ENCODE measurements at regions of chr9 and their contacts with region 1.

Region 1: DNA sequence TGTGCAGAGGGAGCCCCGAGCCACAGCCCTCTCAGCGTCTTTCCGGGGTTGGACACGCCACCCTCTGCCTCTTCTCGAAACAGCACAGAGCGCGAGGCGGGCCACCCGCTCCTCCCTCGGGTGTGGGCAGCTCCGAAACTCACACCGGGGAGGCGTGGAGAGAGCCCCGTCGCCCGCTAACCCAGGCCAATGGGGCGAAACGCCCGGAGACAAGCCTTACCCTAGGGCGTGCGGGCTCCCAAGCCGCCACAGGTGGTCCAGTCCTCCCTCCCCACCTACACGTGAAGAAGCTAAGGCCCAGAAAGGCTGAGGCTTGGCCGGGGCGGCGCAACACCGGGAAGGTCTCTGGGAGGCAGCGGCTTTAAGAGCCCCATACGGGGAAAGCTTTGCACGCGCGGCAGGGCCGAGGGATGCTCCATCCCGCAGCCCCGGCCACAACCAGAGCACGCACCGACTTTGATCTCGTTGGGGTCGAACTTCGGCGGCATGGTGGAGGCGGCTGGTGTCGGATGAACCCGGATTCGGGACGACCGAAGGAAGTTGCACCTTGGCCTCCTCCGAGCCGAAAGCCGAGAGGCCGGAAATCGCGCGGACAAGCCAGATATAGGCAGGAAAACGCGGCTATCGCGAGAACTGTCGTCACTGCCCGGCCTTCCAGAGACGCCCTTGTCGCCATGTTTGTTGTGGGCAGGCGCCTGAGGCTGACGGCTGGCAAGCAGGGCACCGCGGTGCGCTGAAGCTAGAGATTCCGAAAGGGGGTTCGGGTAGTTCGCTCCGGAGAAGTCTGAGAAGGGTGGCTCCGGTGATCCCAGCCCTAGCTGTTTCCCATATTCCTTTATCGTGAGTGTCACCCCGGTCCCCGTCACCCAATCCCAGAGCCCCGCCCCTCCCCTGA is at the starts of genes LRSAM1 and RPL12:
- DNase-seq: peak; percentile 99
- ATAC-seq: peak; percentile 65
- H3K4me3 Mint-ChIP-seq: peak within 1 kb of the TSS; percentile 98
- H3K27ac Mint-ChIP-seq: peak within 1 kb of the TSS; percentile 98
- H3K4me1 Mint-ChIP-seq: peaks cover 36% of the 10 kb centered on the region
- H3K27me3 Mint-ChIP-seq: no peaks in the 10 kb centered on the region
- total RNA-seq, gene LRSAM1: 20.0 to 20.4 TPM
- total RNA-seq, gene RPL12: 2,222 to 2,735 TPM

Region 2: GRCh38 chr9:126804696-126805545 is 646.2 kb before region 1 on chr9 and contains the start of gene ZBTB43:
- CTCF ChIA-PET with region 1: no interaction called
- POLR2A ChIA-PET with region 1: no interaction called
- intact Hi-C with region 1: no loop called
- DNase-seq: peak; percentile 99
- ATAC-seq: peak; percentile 85
- H3K4me3 Mint-ChIP-seq: peak within 1 kb of the TSS; percentile 96
- H3K27ac Mint-ChIP-seq: peak within 1 kb of the TSS; percentile 100
- H3K4me1 Mint-ChIP-seq: peaks cover 36% of the 10 kb centered on the region
- H3K27me3 Mint-ChIP-seq: no peaks in the 10 kb centered on the region
- total RNA-seq, gene ZBTB43: 19.3 to 23.0 TPM

Region 3: GRCh38 chr9:126939821-126940221 is 511.3 kb before region 1 on chr9:
- CTCF ChIA-PET with region 1: no interaction called
- POLR2A ChIA-PET with region 1: no interaction called
- intact Hi-C with region 1: loop called in 1 of 2 experiments (anchors 2 kb)
- DNase-seq: no peak
- ATAC-seq: no peak
- H3K4me3 Mint-ChIP-seq: no peak overlapping the region
- H3K27ac Mint-ChIP-seq: no peak overlapping the region
- H3K4me1 Mint-ChIP-seq: peaks cover 4% of the 10 kb centered on the region
- H3K27me3 Mint-ChIP-seq: peaks cover 16% of the 10 kb centered on the region

Region 4: DNA sequence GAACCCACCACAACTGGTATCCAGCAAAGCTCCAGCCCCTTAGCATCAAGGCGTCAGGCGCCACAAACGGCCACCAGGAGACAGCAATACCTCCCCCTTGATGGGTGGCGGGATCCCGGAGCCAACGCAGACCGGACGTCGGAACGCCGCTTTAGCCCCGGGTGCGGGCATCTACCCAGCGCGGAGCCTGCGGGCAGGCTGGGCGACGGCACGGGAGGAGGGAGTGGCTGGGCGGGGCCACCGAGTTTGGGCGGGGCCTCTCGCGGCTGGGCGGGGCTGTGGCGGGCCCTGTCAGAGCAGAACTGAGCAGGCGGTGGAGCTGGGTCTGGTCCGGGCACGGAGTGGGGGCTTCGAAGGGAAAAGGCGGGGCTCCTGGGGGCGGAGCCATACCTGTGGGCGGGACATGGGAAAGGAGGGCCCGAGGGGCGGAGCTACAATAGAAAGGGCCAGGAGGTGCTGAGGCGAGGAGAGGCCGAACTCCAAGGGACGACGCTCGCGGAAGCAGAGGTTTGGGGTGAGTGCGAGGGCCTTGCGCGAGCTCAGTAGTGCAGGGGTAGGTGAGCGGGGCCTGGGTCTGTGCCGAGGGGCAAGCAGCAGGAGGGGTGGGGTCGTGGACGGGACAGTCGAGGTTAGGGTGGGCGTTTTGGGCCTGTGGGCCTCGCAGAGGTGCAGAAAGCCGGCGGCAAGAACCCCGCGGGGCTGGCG is 226.7 kb before region 1 on chr9:
- CTCF ChIA-PET with region 1: no interaction called
- POLR2A ChIA-PET with region 1: interaction called, 4 read pairs
- intact Hi-C with region 1: loop called in 1 of 2 experiments (anchors 1 kb)
- DNase-seq: peak; percentile 93
- ATAC-seq: peak; percentile 79
- H3K4me3 Mint-ChIP-seq: peak overlapping the region; percentile 68
- H3K27ac Mint-ChIP-seq: peak overlapping the region; percentile 16
- H3K4me1 Mint-ChIP-seq: peaks cover 24% of the 10 kb centered on the region
- H3K27me3 Mint-ChIP-seq: peaks cover 15% of the 10 kb centered on the region

Region 5: GRCh38 chr9:127311239-127311741 is 139.8 kb before region 1 on chr9:
- CTCF ChIA-PET with region 1: interaction called, 4 read pairs
- POLR2A ChIA-PET with region 1: no interaction called
- intact Hi-C with region 1: loop called (anchors 1 to 10 kb)
- DNase-seq: peak; percentile 47
- ATAC-seq: peak; percentile 30
- H3K4me3 Mint-ChIP-seq: no peak overlapping the region
- H3K27ac Mint-ChIP-seq: no peak overlapping the region
- H3K4me1 Mint-ChIP-seq: peaks cover 2% of the 10 kb centered on the region
- H3K27me3 Mint-ChIP-seq: peaks cover 22% of the 10 kb centered on the region

Region 6: GRCh38 chr9:127396808-127397497 is 54.1 kb before region 1 on chr9 and contains the start of gene SLC2A8:
- CTCF ChIA-PET with region 1: no interaction called
- POLR2A ChIA-PET with region 1: no interaction called
- intact Hi-C with region 1: loop called in 1 of 2 experiments (anchors 1 kb)
- DNase-seq: peak; percentile 93
- ATAC-seq: peak; percentile 96
- H3K4me3 Mint-ChIP-seq: peak within 1 kb of the TSS; percentile 58
- H3K27ac Mint-ChIP-seq: no peak within 1 kb of the TSS
- H3K4me1 Mint-ChIP-seq: peaks cover 12% of the 10 kb centered on the region
- H3K27me3 Mint-ChIP-seq: peaks cover 62% of the 10 kb centered on the region
- total RNA-seq, gene SLC2A8: 1.3 to 1.7 TPM

Region 7: GRCh38 chr9:127611899-127612790 is 161.1 kb after region 1 on chr9 and contains the start of gene STXBP1:
- CTCF ChIA-PET with region 1: no interaction called
- POLR2A ChIA-PET with region 1: no interaction called
- intact Hi-C with region 1: loop called in 1 of 2 experiments (anchors 1 kb)
- DNase-seq: peak; percentile 92
- ATAC-seq: peak; percentile 87
- H3K4me3 Mint-ChIP-seq: peak within 1 kb of the TSS; percentile 85
- H3K27ac Mint-ChIP-seq: peak within 1 kb of the TSS; percentile 71
- H3K4me1 Mint-ChIP-seq: peaks cover 26% of the 10 kb centered on the region
- H3K27me3 Mint-ChIP-seq: peaks cover 32% of the 10 kb centered on the region
- total RNA-seq, gene STXBP1: 15.9 to 18.1 TPM

Region 8: DNA sequence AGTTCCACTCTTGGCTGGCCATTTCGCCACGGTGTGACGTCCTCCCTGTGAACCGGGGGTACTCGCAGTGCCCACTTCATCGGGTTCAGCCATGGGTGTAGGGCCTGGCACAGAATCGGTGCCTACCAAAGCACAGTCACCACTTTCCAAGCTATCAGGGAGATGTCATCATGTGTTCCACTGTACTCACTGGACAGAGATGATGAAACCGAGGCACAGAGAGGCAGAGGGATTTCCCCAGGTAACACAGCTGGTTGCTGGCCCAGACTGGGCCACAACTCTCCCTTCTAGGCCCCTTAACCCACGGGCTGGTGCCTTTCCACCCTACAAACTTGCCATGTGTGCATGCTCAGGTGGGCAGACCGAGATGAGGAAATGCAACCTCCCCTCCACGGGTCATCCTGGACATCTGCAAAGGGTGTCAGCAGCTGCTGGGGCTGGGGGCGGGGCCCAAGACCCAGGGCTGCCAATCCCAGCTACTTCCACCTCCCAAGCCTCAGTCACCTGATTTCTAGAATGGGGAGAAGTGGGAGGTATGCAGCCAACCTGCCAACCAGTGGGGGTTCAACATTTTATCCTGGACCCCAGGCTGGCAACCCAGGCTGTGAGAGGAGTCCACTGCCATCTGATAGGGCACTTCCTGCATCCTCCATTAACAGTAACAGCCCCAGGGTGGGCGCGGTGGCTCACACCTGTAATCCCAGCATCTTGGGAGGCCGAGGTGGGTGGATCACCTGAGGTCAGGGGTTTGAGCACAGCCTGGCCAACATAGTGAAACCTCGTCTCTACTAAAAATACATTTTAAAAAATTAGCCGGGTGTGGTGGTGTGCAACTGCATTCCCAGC is 328.3 kb after region 1 on chr9:
- CTCF ChIA-PET with region 1: no interaction called
- POLR2A ChIA-PET with region 1: no interaction called
- intact Hi-C with region 1: loop called in 1 of 2 experiments (anchors 5 kb)
- DNase-seq: peak; percentile 85
- ATAC-seq: peak; percentile 70
- H3K4me3 Mint-ChIP-seq: peak overlapping the region; percentile 92
- H3K27ac Mint-ChIP-seq: peak overlapping the region; percentile 99
- H3K4me1 Mint-ChIP-seq: peaks cover 60% of the 10 kb centered on the region
- H3K27me3 Mint-ChIP-seq: no peaks in the 10 kb centered on the region